PC-9 (cell line): ENCODE measurements at regions of chr9 and their contacts with region 1.

Region 1: DNA sequence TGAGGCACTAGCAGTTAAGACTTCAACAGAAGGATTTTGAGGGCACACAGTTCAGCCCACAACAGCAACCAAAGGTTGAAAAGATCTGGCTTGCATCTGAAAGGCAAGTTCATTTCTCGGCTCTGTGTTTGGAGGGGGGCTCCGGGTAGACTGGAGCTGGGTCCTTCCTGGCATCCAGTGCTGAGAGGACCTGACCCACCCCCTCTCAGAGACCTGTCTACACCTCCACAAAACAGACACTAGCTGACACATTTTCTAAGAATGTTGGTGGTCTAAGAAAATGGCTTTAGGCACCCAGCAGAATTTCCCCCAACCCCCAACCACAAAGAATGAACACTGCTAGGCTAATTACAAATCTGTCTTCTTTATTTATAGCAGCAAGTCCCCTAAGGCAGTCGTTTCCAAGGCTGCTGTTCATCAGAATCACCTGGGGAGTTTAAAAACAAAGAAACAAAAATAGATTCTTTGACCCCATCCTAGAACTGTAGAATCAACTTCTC is 6.2 kb upstream of the PTCH1 start:
- DNase-seq: no peak
- H3K4me3 ChIP-seq: no peak overlapping the region
- H3K27ac ChIP-seq: no peak overlapping the region
- H3K4me1 ChIP-seq: no peaks in the 10 kb centered on the region
- H3K27me3 ChIP-seq: peaks cover 86% of the 10 kb centered on the region
- CTCF ChIP-seq: no peak

Region 2: DNA sequence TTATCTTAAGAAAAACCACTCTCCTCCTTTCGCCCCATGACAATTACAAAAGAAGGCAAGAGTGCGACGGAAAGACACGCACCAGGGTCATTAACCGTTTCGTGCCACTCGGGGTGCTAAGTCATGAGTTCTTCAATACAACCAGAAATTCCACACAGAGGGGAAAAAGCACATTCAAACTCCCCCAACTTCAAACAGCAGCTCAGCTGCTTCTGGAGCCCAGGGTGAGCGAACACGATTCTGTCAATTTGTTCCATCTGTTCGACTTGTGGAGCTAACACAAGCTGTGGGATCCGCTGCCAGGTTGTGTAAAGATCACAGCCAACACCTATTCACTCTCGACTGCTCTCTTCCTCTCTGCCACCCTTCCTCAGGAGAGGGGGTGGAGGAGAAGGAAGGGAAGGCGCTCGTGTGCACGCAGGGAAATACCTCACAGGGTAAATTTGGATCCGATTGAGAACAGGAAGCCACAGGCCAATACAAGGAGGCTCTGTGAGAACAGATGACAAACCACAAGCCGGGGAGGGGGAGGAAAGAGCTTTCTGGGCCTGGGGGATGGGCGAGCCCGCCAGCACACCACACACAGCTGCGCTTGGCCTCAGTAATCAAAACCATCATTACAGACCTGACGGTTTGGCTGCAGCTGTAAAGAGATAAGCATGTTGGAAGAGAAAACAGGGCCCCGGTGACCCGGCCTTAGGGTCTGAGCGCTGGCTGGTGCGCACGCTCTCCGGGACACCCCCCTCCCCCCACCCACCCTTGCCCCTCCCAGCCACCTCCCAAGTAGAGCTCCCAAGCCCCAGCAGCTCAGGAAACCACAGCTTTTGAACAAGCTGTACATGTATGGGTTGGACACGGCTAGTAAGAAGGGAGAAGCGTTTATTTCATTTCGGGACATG is 60.4 kb before region 1 on chr9:
- CTCF ChIA-PET with region 1: no interaction called
- POLR2A ChIA-PET with region 1: no interaction called
- intact Hi-C with region 1: no loop called
- DNase-seq: no peak
- H3K4me3 ChIP-seq: no peak overlapping the region
- H3K27ac ChIP-seq: no peak overlapping the region
- H3K4me1 ChIP-seq: no peaks in the 10 kb centered on the region
- H3K27me3 ChIP-seq: no peaks in the 10 kb centered on the region
- CTCF ChIP-seq: no peak

Region 3: DNA sequence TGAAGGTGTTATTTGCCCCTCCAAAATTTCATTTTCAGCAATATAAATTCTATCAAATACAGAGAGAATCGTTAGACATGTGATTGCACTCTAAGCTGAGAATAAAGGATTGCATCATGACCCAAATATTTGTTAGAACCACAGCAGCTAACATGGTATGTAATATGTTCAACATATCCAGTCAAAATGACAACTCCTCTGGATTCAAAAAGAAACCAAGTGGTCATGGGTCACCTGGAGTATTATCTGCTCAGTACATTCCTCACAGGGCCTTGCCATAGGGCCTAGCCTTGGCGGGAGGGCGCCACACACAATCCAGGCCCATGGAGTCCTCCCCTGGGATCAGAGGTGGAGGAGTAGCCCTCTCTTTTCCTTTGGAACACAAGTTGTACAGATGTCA is 599.8 kb after region 1 on chr9:
- CTCF ChIA-PET with region 1: no interaction called
- POLR2A ChIA-PET with region 1: interaction called, 10 read pairs
- intact Hi-C with region 1: no loop called
- DNase-seq: no peak
- H3K4me3 ChIP-seq: no peak overlapping the region
- H3K27ac ChIP-seq: no peak overlapping the region
- H3K4me1 ChIP-seq: no peaks in the 10 kb centered on the region
- H3K27me3 ChIP-seq: peaks cover 32% of the 10 kb centered on the region; the same call in 1 of the 2 replicates
- CTCF ChIP-seq: no peak